ENCODE measurements at regions of chr2 and their contacts with region 1.

Region 1: DNA sequence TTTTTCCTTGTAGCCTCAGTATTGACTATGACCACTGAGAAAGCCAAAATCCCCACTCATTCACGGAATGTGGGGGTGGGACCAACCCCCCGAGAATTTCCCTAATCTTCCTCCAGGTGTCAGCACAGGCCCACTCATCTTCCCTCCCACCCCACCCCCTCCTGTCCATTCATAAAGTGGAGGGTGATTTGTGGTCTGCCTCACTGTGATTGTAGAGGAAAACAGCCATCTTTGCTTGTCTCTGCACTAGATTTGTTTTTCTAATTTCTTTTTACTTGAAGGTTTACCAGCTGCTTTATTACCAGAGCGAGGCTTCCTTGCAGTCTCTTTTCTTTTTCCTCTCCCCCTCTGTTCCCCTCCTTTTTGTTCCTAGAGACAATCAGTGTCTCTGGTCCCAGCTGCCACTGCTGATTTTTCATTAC is 171.8 kb downstream of the ICOS start:
- DNase-seq: peak; percentile 74
- ATAC-seq: peak; percentile 30
- H3K4me3 Mint-ChIP-seq: peak overlapping the region; percentile 58
- H3K27ac Mint-ChIP-seq: peak overlapping the region; percentile 92
- H3K4me1 Mint-ChIP-seq: peaks cover 75% of the 10 kb centered on the region
- H3K27me3 Mint-ChIP-seq: peaks cover 2% of the 10 kb centered on the region

Region 2: GRCh38 chr2:202718614-202719013 is 1389.7 kb before region 1 on chr2:
- CTCF ChIA-PET with region 1: no interaction called
- POLR2A ChIA-PET with region 1: no interaction called
- intact Hi-C with region 1: no loop called
- DNase-seq: no peak
- ATAC-seq: no peak
- H3K4me3 Mint-ChIP-seq: no peak overlapping the region
- H3K27ac Mint-ChIP-seq: peak overlapping the region; percentile 55
- H3K4me1 Mint-ChIP-seq: peaks cover 39% of the 10 kb centered on the region
- H3K27me3 Mint-ChIP-seq: no peaks in the 10 kb centered on the region

Region 3: GRCh38 chr2:203400816-203401585 is 707.3 kb before region 1 on chr2:
- CTCF ChIA-PET with region 1: no interaction called
- POLR2A ChIA-PET with region 1: no interaction called
- intact Hi-C with region 1: no loop called
- DNase-seq: no peak
- ATAC-seq: no peak
- H3K4me3 Mint-ChIP-seq: no peak overlapping the region
- H3K27ac Mint-ChIP-seq: no peak overlapping the region
- H3K4me1 Mint-ChIP-seq: no peaks in the 10 kb centered on the region
- H3K27me3 Mint-ChIP-seq: no peaks in the 10 kb centered on the region

Region 4: GRCh38 chr2:203940039-203940438 is 168.3 kb before region 1 on chr2:
- CTCF ChIA-PET with region 1: no interaction called
- POLR2A ChIA-PET with region 1: interaction called, 4 read pairs
- intact Hi-C with region 1: loop called (anchors 1 to 2 kb)
- DNase-seq: no peak
- ATAC-seq: peak; percentile 7
- H3K4me3 Mint-ChIP-seq: peak overlapping the region; percentile 87
- H3K27ac Mint-ChIP-seq: peak overlapping the region; percentile 98
- H3K4me1 Mint-ChIP-seq: peaks cover 53% of the 10 kb centered on the region
- H3K27me3 Mint-ChIP-seq: no peaks in the 10 kb centered on the region

Region 5: DNA sequence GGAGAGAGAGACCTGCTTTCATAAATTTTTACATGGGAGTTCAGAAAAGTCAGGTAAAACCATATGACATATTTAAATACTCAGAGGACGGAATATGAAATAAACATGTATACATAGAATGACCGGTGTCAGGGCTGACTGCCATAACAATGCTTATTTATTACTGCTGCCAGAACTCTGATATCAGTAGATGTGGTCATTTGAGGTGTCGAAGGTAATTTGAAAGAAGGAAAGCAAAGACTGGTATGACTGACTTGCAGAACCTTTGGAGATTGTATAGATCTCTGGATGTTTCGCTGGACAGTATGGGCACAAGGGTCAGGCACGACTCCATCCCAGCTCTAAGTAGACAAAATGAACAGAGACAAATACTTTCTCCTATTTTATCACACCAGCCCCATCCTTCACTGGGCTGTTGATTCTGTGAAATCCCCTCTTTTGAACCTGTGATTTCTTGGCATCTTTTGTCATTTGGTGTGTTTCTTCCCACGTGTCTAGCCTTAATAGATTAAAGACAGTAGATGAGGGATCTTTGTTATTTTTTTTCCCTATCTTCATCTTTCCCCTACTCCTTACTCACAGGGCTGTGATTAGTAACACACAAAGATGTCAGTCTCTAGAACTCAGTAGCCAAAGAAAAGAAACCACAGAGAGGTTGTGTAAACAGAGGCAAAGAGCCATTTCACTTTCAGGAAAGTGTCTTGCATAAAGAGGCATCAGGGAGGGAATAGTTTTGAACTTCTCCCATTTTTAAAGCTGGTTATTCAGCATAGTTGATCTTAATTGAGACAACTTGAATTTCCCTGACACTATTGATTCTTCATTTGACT is 110.1 kb before region 1 on chr2:
- CTCF ChIA-PET with region 1: no interaction called
- POLR2A ChIA-PET with region 1: interaction called, 3 read pairs
- intact Hi-C with region 1: loop called (anchors 2 kb)
- DNase-seq: no peak
- ATAC-seq: peak; percentile 73
- H3K4me3 Mint-ChIP-seq: peak overlapping the region; percentile 32
- H3K27ac Mint-ChIP-seq: peak overlapping the region; percentile 86
- H3K4me1 Mint-ChIP-seq: peaks cover 67% of the 10 kb centered on the region
- H3K27me3 Mint-ChIP-seq: no peaks in the 10 kb centered on the region

Region 6: GRCh38 chr2:204072443-204073324 is 35.7 kb before region 1 on chr2:
- CTCF ChIA-PET with region 1: interaction called, 8 read pairs
- POLR2A ChIA-PET with region 1: no interaction called
- intact Hi-C with region 1: loop called in 1 of 2 experiments (anchors 2 kb)
- DNase-seq: peak; percentile 88
- ATAC-seq: peak; percentile 89
- H3K4me3 Mint-ChIP-seq: no peak overlapping the region
- H3K27ac Mint-ChIP-seq: no peak overlapping the region
- H3K4me1 Mint-ChIP-seq: peaks cover 7% of the 10 kb centered on the region
- H3K27me3 Mint-ChIP-seq: peaks cover 5% of the 10 kb centered on the region

Region 7: GRCh38 chr2:204177977-204178540 is 69.7 kb after region 1 on chr2:
- CTCF ChIA-PET with region 1: interaction called, 18 read pairs
- POLR2A ChIA-PET with region 1: no interaction called
- intact Hi-C with region 1: loop called (anchors 1 kb)
- DNase-seq: peak; percentile 85
- ATAC-seq: peak; percentile 95
- H3K4me3 Mint-ChIP-seq: no peak overlapping the region
- H3K27ac Mint-ChIP-seq: no peak overlapping the region
- H3K4me1 Mint-ChIP-seq: peaks cover 8% of the 10 kb centered on the region
- H3K27me3 Mint-ChIP-seq: peaks cover 7% of the 10 kb centered on the region

Region 8: DNA sequence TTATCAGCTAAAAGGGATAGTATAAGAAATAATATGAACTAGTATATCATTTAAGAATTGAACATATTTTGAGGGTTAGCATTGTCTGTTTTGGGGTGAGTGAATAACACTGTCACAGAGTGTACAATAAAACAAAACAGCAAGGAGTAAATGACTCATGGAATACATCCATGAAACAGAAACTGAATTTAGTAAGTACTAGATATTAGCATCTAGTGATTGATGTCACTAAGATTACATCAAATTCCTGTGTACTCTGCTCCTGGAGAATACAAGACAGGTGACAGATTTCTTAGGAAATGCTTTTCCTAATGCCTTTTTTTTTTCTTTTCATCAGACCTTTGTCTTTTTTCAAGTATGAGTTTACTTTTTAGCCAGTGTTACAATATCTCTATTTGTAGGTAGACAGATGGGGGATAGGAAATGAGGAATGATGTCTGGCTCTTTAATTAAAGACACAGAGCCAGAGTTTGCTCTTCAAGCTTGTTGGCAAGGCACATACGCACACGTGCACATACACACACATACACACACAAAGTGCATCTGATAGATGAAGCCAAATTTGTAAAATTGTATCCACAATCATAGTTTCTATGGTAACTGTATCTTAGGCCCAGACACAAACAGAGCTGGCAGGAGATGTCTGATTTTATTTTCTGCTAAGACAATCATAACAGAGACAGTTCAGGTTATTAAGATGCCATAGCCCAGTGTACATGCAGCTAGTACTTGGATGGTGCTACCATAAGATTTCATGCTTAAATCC is 1435.8 kb after region 1 on chr2:
- CTCF ChIA-PET with region 1: no interaction called
- POLR2A ChIA-PET with region 1: no interaction called
- intact Hi-C with region 1: loop called in 1 of 2 experiments (anchors 5 kb)
- DNase-seq: no peak
- ATAC-seq: peak; percentile 80
- H3K4me3 Mint-ChIP-seq: no peak overlapping the region
- H3K27ac Mint-ChIP-seq: no peak overlapping the region
- H3K4me1 Mint-ChIP-seq: peaks cover 29% of the 10 kb centered on the region
- H3K27me3 Mint-ChIP-seq: no peaks in the 10 kb centered on the region

Measured in activated CD4-positive, alpha-beta T cell treated with anti-CD3 and anti-CD28 coated beads for 36 hours (primary cell).